ENCODE measurements at regions of chr5 and their contacts with region 1.

Region 1: GRCh38 chr5:108345541-108346171 is 36.2 kb downstream of the FBXL17 start:
- DNase-seq: no peak
- H3K4me3 Mint-ChIP-seq: no peak overlapping the region
- H3K27ac Mint-ChIP-seq: no peak overlapping the region
- H3K4me1 Mint-ChIP-seq: no peaks in the 10 kb centered on the region
- H3K27me3 Mint-ChIP-seq: no peaks in the 10 kb centered on the region

Region 2: GRCh38 chr5:108148715-108149139 is 196.9 kb before region 1 on chr5:
- CTCF ChIA-PET with region 1: interaction called, 5 read pairs
- POLR2A ChIA-PET with region 1: no interaction called
- intact Hi-C with region 1: loop called (anchors 10 kb)
- DNase-seq: no peak
- H3K4me3 Mint-ChIP-seq: no peak overlapping the region
- H3K27ac Mint-ChIP-seq: no peak overlapping the region
- H3K4me1 Mint-ChIP-seq: peaks cover 4% of the 10 kb centered on the region
- H3K27me3 Mint-ChIP-seq: no peaks in the 10 kb centered on the region